ENCODE measurements at regions of chr19 and their contacts with region 1.

Region 1: DNA sequence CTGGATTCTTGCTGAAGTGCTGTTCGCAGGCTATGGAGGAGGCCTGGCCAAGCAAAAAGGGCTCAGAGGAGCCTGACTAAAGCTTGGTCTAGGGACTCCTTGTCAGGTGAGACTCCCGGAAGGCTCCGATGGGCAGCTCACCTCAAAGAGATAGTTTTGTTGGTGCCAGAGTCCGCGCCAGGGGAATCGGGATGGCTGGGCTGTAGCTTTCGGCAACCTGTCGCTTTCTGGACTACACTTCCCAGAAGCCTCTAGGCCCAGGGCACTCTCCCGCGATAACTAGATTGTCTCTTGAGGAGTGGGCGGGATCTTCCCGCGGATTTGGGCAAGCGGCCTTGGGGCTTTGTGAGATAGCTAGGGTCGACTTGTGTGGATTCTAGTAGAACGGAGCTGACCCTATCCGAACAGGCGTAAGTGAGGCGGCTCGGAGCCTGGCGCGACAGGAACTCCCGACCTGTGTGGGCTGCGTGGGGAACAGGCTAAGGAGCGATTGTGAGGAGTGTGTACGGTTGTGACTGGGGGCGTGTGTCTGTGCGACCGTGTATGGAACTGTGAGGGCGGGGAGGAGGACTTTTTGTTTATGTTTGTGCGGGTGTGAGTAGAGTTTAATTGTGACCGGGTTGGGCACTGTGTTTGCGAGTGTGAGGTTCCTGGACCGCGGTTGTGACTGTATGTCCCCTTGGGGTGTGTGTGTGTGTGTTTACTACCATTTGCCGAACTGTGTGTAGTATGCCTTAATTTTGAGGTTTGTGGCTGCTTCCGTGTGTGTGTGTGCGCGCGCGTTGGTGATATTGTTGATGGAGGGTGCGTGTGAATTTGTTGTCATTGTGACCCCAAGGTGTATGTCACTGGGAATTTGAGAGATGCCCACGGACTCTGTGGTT is at the start of gene ZNF345:
- DNase-seq: peak; percentile 92
- H3K4me3 ChIP-seq: peak within 1 kb of the TSS; percentile 65 to 81 (median 76)
- H3K27ac ChIP-seq: peak within 1 kb of the TSS; percentile 74
- H3K4me1 ChIP-seq: no peaks in the 10 kb centered on the region
- H3K27me3 ChIP-seq: no peaks in the 10 kb centered on the region
- CTCF ChIP-seq: no peak
- total RNA-seq, gene ZNF345: 1.4 to 2.8 TPM

Region 2: DNA sequence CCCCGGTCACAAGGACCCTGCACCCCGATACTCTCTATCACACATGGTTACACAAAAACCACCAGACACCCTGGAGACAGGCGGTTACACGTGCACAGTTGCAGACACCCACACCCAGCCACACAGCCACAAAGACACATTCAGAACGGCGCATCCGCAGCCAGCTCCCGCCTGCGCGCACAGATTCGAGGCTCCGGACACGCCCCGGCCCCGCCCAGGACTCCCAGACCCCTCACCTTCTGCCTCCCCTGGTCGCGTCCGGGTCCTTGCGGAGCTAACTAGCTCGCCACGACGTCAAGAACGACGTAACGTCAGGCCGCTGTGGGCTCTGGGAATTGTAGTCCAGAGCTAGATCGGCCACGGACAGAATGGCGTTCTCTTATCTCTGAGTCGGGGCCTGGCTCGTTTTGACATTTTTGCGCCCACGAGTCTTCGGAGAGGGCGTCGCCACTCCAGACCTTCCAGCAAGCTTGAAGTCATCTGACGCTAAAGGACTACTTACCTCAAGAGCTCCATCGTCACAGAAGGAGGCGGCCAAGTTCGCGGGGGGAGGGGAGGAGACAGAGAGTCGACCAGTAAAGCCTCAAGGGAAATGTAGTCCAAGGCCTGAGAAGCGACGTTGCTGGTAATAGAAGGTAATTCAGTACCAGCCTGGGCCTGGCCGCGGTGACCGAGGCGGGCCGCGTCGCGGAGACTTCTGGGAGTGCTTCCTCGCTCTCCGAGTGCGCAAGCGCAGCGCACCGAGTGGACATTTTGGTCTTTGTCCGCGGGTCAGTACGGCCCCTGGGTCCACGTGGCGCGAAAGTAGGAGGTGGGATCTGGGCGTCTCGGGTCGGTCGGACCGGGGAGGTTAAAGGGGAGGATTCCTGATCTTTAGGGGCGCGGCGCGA is 636.2 kb before region 1 on chr19 and contains the starts of genes ZNF146 and ZNF565:
- CTCF ChIA-PET with region 1: no interaction called
- dilution Hi-C with region 1: no loop called
- in situ Hi-C with region 1: no loop called
- intact Hi-C with region 1: loop called (anchors 10 kb)
- DNase-seq: peak; percentile 98
- H3K4me3 ChIP-seq: peak within 1 kb of the TSS; percentile 88 to 95 (median 88)
- H3K27ac ChIP-seq: peak within 1 kb of the TSS; percentile 85
- H3K4me1 ChIP-seq: peaks cover 7% of the 10 kb centered on the region
- H3K27me3 ChIP-seq: no peaks in the 10 kb centered on the region
- CTCF ChIP-seq: no peak
- total RNA-seq, gene ZNF146: 74.5 to 77.3 TPM
- total RNA-seq, gene ZNF565: 2.8 to 3.5 TPM

Region 3: DNA sequence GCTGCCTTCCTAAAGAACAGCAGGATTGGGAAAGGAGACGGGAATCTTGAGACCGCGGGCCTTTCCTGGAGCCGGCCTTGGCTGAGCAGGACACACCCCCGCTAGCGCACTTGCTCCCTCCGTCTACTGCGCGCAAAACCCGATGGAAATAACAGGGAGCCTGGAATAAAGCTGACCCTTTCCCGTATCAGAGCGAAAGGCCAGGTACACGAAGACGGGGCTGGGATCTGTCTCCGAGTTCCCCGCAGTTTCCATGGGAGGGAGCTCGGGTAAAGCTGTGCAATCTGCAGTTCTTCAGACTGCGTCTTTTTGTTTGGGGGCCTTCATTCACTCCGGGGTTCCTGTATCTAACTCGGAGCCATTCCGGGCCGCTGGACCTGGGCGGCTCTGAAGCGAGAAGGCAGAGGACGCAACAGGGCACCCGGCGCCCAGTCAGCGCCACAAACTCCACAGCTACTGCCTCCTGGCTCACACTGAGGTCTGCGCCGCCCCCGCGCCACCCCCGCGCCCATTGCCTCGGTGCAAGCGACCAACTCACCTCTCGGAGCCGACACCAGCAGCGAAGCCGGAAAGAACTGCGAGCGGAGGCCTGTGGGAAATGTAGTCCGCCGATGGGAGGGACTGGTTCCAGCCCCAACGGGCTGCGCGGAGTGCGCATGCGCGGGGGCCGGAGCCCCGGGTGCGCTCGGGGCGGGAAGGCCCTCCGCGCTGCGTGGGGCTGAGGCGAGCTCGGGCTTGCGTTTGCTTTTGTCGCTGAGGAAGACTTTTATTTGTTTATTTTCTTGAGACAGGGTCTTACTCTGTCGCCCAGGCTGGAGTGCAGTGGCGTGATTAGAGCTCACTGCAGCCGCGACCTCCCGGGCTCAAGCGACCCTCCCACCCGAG is 471.9 kb before region 1 on chr19 and contains the start of gene ZFP14:
- CTCF ChIA-PET with region 1: no interaction called
- dilution Hi-C with region 1: no loop called
- in situ Hi-C with region 1: no loop called
- intact Hi-C with region 1: loop called (anchors 2 kb)
- DNase-seq: peak; percentile 93
- H3K4me3 ChIP-seq: peak within 1 kb of the TSS; percentile 71 to 95 (median 75)
- H3K27ac ChIP-seq: peak within 1 kb of the TSS; percentile 52
- H3K4me1 ChIP-seq: peaks cover 6% of the 10 kb centered on the region
- H3K27me3 ChIP-seq: no peaks in the 10 kb centered on the region
- CTCF ChIP-seq: peak in 1 of 2 donors; percentile 45
- total RNA-seq, gene ZFP14: 0.73 to 2.5 TPM

Region 4: GRCh38 chr19:36687214-36688056 is 163.4 kb before region 1 on chr19 and contains the start of gene ZNF567:
- CTCF ChIA-PET with region 1: no interaction called
- dilution Hi-C with region 1: no loop called
- in situ Hi-C with region 1: no loop called
- intact Hi-C with region 1: loop called (anchors 10 kb)
- DNase-seq: peak; percentile 96
- H3K4me3 ChIP-seq: peak within 1 kb of the TSS; percentile 75 to 92 (median 90)
- H3K27ac ChIP-seq: peak within 1 kb of the TSS; percentile 69
- H3K4me1 ChIP-seq: no peaks in the 10 kb centered on the region
- H3K27me3 ChIP-seq: no peaks in the 10 kb centered on the region
- CTCF ChIP-seq: peak in 1 of 2 donors; percentile 11
- total RNA-seq, gene ZNF567: 7.3 to 7.5 TPM

Region 5: GRCh38 chr19:36837906-36838783 is 12.7 kb before region 1 on chr19 and contains the start of gene ZNF790:
- CTCF ChIA-PET with region 1: no interaction called
- dilution Hi-C with region 1: no loop called
- in situ Hi-C with region 1: no loop called
- intact Hi-C with region 1: loop called (anchors 1 kb)
- DNase-seq: peak; percentile 88
- H3K4me3 ChIP-seq: peak within 1 kb of the TSS; percentile 54 to 64 (median 57)
- H3K27ac ChIP-seq: peak within 1 kb of the TSS; percentile 14
- H3K4me1 ChIP-seq: peaks cover 6% of the 10 kb centered on the region
- H3K27me3 ChIP-seq: no peaks in the 10 kb centered on the region
- CTCF ChIP-seq: no peak
- total RNA-seq, gene ZNF790: 7.5 to 8.6 TPM

Region 6: GRCh38 chr19:36915992-36916830 is 65.4 kb after region 1 on chr19 and contains the starts of genes ZNF568 and ZNF829:
- CTCF ChIA-PET with region 1: no interaction called
- dilution Hi-C with region 1: no loop called
- in situ Hi-C with region 1: no loop called
- intact Hi-C with region 1: loop called (anchors 5 kb)
- DNase-seq: peak; percentile 89
- H3K4me3 ChIP-seq: peak within 1 kb of the TSS; percentile 44 to 81 (median 75)
- H3K27ac ChIP-seq: peak within 1 kb of the TSS; percentile 64
- H3K4me1 ChIP-seq: no peaks in the 10 kb centered on the region
- H3K27me3 ChIP-seq: no peaks in the 10 kb centered on the region
- CTCF ChIP-seq: peak; percentile 31 to 73
- total RNA-seq, gene ZNF568: 9.4 to 15.7 TPM
- total RNA-seq, gene ZNF829: 5.1 to 6.0 TPM

Region 7: DNA sequence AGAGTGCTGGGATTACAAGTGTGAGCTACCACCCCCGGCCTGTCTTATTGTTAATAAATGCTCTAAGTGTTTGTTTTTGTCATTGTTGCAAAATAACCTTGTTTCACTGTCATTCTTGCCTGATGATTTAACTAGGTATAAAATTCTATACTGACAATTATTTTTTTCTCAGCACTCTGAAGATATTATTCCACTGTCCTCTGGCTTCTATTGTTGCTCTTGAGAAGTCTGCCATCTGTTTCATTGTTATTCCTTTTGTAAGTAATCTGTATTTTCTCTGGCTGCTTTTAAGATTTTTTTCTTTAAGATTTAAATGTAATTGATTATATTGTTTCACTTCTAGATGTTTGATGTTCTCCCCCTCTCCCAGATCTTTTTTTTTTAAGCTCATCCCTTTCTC is 245.1 kb after region 1 on chr19:
- CTCF ChIA-PET with region 1: no interaction called
- dilution Hi-C with region 1: no loop called
- in situ Hi-C with region 1: no loop called
- intact Hi-C with region 1: no loop called
- DNase-seq: no peak
- H3K4me3 ChIP-seq: no peak overlapping the region
- H3K27ac ChIP-seq: no peak overlapping the region
- H3K4me1 ChIP-seq: no peaks in the 10 kb centered on the region
- H3K27me3 ChIP-seq: no peaks in the 10 kb centered on the region
- CTCF ChIP-seq: no peak

Region 8: GRCh38 chr19:37217855-37218591 is 367.2 kb after region 1 on chr19 and contains the start of gene ZNF383:
- CTCF ChIA-PET with region 1: no interaction called
- dilution Hi-C with region 1: no loop called
- in situ Hi-C with region 1: no loop called
- intact Hi-C with region 1: loop called (anchors 5 kb)
- DNase-seq: peak; percentile 90
- H3K4me3 ChIP-seq: peak within 1 kb of the TSS; percentile 66 to 84 (median 73)
- H3K27ac ChIP-seq: peak within 1 kb of the TSS; percentile 68
- H3K4me1 ChIP-seq: peaks cover 11% of the 10 kb centered on the region
- H3K27me3 ChIP-seq: no peaks in the 10 kb centered on the region
- CTCF ChIP-seq: no peak
- total RNA-seq, gene ZNF383: 6.2 to 9.7 TPM